HCT116 (cell line): ENCODE measurements at regions of chr13 and their contacts with region 1.

Region 1: DNA sequence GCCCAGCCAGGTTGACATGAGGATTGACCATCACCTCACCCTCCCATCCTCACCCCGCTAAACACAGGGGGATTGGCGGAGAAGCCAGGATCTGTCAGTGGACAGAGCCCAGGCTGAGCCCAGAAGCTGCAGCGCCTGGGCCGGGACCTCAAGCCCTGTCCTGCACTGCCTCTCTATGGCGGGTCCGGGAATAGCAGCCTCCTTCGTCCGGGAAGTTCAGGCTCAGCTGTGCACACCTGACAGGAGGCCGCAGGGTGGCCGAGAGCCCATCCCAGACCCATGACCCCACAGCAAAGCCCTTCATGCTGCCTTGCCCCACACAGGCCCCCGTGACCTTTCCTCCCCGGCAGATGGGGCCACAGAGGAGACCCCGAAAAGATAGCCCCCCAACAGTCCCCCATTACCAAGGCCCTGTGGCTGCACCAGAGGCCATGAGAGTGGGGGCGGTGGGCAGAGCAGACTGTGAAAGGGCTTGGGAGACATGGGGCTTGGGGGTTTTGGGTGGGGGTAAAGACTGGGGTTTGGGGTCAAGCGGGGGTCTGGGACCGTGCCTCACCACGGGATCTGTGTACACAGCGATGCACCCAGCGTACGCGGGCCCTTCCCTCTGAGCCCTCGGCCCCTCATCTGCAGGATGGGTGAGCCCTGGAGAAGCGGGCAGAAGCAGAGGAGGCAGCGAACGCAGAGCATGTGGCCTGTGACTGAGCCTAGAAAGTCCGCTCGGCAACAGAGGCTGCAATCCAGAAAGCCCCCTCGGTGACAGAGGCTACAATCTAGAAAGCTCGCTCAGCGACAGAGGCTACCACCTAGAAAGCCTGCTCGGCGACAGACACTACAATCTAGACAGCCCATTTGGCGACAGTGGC is 68.1 kb downstream of the SPACA7 start:
- DNase-seq: peak; percentile 34
- ATAC-seq: peak; percentile 95
- H3K4me3 ChIP-seq: no peak overlapping the region
- H3K27ac ChIP-seq: no peak overlapping the region
- H3K4me1 ChIP-seq: no peaks in the 10 kb centered on the region
- H3K27me3 ChIP-seq: no peaks in the 10 kb centered on the region
- CTCF ChIP-seq: peak; percentile 86 to 96 (median 90)
- POLR2A ChIP-seq: no peak
- RAD21 ChIP-seq: peak; percentile 97

Region 2: DNA sequence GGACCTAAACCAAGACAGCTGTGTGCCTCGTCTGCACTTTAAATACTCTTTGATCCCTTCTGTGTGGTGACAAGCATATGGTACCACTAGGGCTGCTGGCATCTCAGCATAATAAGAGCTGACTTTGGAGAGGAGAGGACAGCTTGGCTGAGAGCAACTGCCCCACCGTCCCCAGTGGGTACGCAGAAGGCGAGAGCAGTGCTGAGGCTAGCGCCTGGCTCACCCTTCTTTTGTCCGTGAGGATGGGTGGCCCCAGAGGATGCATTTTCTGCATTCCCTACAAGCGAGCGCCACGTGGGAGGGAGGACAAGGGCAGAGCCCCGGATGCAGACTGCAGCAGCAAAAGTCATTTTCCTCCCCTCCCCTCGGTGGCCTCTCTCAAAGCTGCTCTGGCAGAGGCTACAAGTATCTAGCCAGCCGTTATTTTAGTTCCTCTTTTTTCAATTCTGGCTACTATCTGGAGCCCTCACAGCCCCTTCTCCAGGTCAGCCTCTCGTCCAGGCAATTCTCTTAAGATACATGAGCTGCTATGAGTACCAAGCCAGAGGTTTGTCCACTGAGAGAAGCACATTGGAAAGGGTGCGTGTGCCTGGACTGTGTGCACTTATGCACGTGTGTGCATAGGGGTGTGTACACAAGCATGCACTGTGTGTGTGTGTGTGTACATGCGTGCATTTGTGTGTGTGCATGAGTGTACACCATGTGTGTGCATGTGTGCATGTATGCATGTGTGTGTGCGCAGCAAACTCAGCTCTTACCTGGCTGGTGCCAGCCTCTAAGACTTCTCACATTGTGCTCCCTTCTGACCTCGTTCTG is 1934.0 kb before region 1 on chr13:
- CTCF ChIA-PET with region 1: no interaction called
- POLR2A ChIA-PET with region 1: no interaction called
- RAD21 ChIA-PET with region 1: no interaction called
- intact Hi-C with region 1: no loop called
- DNase-seq: no peak
- ATAC-seq: 0 out of 2 replicates have a peak, but pooled peaks have one; percentile 6
- H3K4me3 ChIP-seq: no peak overlapping the region
- H3K27ac ChIP-seq: no peak overlapping the region
- H3K4me1 ChIP-seq: peaks cover 11 to 27% of the 10 kb centered on the region in 2 experiments
- H3K27me3 ChIP-seq: no peaks in the 10 kb centered on the region
- CTCF ChIP-seq: no peak
- POLR2A ChIP-seq: no peak
- RAD21 ChIP-seq: no peak

Region 3: DNA sequence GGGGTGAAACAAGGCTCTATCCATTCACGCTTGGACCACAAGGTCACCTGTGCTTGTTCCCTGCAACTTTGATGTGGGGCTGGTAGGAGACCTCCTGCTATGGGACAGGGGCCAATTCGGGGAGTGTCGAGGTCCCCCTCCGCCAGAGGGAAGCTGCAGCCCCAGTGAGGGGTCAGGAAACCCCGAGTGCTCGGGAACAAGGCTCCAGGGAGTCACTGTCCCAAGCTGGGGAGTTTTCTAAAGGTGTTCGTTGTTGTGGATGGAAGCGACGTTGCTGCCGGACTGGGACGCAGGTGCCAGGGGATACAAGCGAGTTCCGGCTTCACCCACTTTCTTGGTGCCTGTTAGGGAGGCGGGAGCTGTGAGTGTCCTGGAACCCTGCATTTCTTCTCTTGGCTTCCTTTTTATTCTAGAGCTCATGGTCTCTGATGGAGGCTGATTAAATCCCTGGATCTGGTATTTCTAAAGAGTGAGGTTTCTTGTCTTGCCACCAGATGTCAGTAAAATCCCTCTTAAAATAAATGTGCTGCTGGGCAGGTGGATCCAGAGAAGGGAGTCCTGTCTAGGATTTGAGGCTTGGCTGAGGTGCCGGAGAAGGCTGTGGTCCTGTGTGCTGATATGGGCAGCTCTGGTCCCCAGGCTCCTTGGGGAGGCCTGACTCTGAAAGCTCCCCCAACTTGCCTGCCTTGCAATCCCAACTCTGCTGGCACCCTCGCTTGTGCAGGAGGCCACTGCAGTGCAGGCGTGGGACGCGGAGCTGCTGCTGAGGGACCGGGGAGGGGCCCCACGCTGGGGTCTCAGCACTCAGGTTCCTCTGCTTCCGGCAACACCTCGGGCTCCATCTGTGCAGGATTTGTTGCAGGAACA is 969.9 kb before region 1 on chr13:
- CTCF ChIA-PET with region 1: interaction called, 26 read pairs
- POLR2A ChIA-PET with region 1: no interaction called
- RAD21 ChIA-PET with region 1: interaction called, 3 to 7 read pairs
- intact Hi-C with region 1: loop called (anchors 1 kb)
- DNase-seq: peak; percentile 21
- ATAC-seq: peak; percentile 85
- H3K4me3 ChIP-seq: no peak overlapping the region
- H3K27ac ChIP-seq: no peak overlapping the region
- H3K4me1 ChIP-seq: no peaks in the 10 kb centered on the region
- H3K27me3 ChIP-seq: no peaks in the 10 kb centered on the region
- CTCF ChIP-seq: peak; percentile 55 to 66 (median 58); a peak in 5 of 6 replicates
- POLR2A ChIP-seq: no peak
- RAD21 ChIP-seq: peak; percentile 76

Region 4: GRCh38 chr13:111505175-111505777 is 939.0 kb before region 1 on chr13:
- CTCF ChIA-PET with region 1: interaction called, 19 read pairs
- POLR2A ChIA-PET with region 1: no interaction called
- RAD21 ChIA-PET with region 1: interaction called, 3 to 6 read pairs
- intact Hi-C with region 1: loop called (anchors 1 kb)
- DNase-seq: peak; percentile 33
- ATAC-seq: peak; percentile 91
- H3K4me3 ChIP-seq: no peak overlapping the region
- H3K27ac ChIP-seq: no peak overlapping the region
- H3K4me1 ChIP-seq: no peaks in the 10 kb centered on the region
- H3K27me3 ChIP-seq: peaks cover 11% of the 10 kb centered on the region; the same call in 1 of the 2 replicates
- CTCF ChIP-seq: peak; percentile 72 to 93 (median 80)
- POLR2A ChIP-seq: no peak
- RAD21 ChIP-seq: peak; percentile 68

Region 5: DNA sequence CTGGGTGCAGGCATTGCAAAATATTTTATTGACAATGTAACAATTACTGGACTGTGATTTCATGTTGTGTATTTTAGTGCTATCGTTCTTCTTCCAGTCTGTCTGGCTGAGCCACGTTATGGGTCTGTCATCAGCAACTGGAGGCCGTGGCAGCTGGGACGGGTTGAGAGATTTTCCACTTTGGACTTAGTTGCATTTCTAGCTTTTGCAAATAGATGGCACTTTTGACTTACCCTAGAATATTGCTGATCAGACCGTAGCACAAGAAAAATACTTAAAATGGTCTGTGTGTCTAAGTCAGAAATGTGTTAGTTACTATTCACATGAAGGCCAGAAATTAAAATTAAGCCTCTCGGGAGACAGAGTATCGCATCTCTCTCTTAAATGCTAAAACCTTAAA is 912.7 kb before region 1 on chr13:
- CTCF ChIA-PET with region 1: interaction called, 3 read pairs
- POLR2A ChIA-PET with region 1: no interaction called
- RAD21 ChIA-PET with region 1: no interaction called
- intact Hi-C with region 1: loop called (anchors 10 kb)
- DNase-seq: peak; percentile 6
- ATAC-seq: peak; percentile 68
- H3K4me3 ChIP-seq: no peak overlapping the region
- H3K27ac ChIP-seq: no peak overlapping the region
- H3K4me1 ChIP-seq: no peaks in the 10 kb centered on the region
- H3K27me3 ChIP-seq: peaks cover 61% of the 10 kb centered on the region
- CTCF ChIP-seq: peak in 2 of 3 experiments; percentile 17 to 20; a peak in 2 of 6 replicates
- POLR2A ChIP-seq: no peak
- RAD21 ChIP-seq: peak; percentile 54

Region 6: GRCh38 chr13:112575675-112576074 is 131.4 kb after region 1 on chr13:
- CTCF ChIA-PET with region 1: no interaction called
- POLR2A ChIA-PET with region 1: no interaction called
- RAD21 ChIA-PET with region 1: no interaction called
- intact Hi-C with region 1: no loop called
- DNase-seq: no peak
- ATAC-seq: peak; percentile 72; the same call in 1 of the 2 replicates
- H3K4me3 ChIP-seq: no peak overlapping the region
- H3K27ac ChIP-seq: no peak overlapping the region
- H3K4me1 ChIP-seq: peaks cover 0 to 5% of the 10 kb centered on the region in 2 experiments; a peak in 1 of 4 replicates
- H3K27me3 ChIP-seq: no peaks in the 10 kb centered on the region
- CTCF ChIP-seq: 0 out of 6 replicates have a peak, but pooled peaks of 1 of the 3 experiments have one; percentile 10
- POLR2A ChIP-seq: no peak
- RAD21 ChIP-seq: no peak

Region 7: DNA sequence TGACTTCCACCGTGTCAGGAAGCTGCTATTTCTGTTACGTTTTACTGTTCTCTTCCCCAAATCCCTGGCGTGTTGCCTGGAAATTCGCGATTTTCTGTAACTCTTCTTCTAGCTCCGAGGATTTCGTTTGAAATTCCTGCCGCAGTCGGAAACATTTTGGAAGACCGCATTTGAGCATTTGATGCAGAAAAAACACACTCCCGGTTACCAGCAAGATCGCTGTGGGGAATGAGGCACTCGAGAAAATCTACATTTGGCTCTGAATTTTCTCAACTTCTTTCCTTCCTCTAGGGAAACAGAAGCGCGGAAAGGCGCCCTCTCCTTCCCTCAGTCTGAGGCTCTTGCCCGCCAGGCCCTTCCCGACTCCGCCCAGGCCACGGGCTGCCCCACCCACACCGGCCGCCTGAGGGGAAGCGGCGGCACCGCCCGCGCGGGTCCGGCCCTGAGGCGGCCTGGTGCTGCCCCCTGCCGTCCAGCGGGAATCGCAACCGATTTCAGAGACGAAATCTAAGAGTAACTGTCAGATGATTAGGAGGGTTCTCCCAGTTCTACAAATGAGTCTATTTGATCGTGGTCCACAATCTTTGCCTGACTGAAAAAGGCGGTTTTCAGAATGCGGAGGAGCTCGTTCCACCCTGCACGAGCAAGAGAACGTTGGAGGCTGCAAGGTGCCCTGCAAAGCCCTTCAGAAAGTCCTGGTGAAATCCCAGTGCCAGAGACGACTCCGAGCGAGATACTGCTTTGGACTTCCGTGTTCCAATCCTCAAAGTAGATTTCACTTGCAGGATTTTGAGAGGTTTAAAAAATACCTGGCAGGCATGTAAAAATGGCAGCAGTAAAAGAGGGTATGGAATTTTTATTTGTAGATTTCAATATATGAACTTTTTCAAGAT is 162.1 kb after region 1 on chr13:
- CTCF ChIA-PET with region 1: no interaction called
- POLR2A ChIA-PET with region 1: no interaction called
- RAD21 ChIA-PET with region 1: no interaction called
- intact Hi-C with region 1: loop called (anchors 1 kb)
- DNase-seq: peak; percentile 65
- ATAC-seq: peak; percentile 100
- H3K4me3 ChIP-seq: peak overlapping the region; percentile 40 to 49
- H3K27ac ChIP-seq: no peak overlapping the region
- H3K4me1 ChIP-seq: peaks cover 0 to 9% of the 10 kb centered on the region in 2 experiments; a peak in 2 of 4 replicates
- H3K27me3 ChIP-seq: peaks cover 10% of the 10 kb centered on the region; the same call in 1 of the 2 replicates
- CTCF ChIP-seq: peak; percentile 80 to 94 (median 92)
- POLR2A ChIP-seq: no peak
- RAD21 ChIP-seq: peak; percentile 95